Psoas muscle (tissue), 8 donors: ENCODE measurements at regions of chr20 and their contacts with region 1.

Region 1: DNA sequence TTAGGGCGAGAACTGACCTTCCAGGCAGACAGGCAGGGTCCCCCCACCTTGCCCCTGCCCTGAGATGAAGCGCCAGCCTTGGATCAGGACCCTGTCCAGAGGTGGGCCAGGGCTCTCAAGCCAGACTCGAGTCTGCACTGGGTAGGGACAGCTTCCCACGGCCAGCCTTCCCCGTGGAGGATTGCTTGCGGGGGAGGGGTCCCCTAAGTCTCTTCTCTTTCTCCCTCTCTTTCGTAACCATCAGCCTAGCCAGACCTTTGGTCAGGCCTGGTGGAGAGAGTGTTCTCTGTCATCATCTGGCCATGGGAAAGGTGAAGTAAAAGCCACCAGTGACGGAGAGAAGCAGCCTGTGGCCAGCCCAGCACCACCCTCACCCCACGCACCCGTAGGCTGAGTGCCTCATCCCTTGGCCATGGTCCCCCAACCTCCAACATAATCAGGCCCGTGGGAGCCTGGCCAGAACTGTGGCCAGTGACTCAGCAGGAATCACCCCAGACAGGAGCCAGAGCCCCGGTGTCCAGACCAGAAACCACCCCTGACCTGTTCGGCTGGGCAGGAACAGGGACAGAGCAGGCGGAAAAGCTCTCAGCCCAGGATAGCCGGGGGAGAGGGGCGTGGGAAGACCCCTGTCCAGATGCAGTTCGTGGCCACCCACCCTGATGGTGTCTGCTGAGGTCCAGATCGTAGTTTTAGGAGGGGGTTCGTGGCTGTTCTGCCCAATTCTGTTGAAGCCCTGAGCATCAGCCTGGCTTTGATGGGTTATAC is 47.1 kb downstream of the SNAI1 start:
- DNase-seq: peak; percentile 77
- ATAC-seq: peak; percentile 72 to 83 (median 82)
- H3K4me3 ChIP-seq: no peak overlapping the region
- H3K27ac ChIP-seq: no peak overlapping the region
- H3K4me1 ChIP-seq: peaks cover 12% of the 10 kb centered on the region
- H3K27me3 ChIP-seq: no peaks in the 10 kb centered on the region
- CTCF ChIP-seq: no peak

Region 2: GRCh38 chr20:49989234-49990065 is 40.4 kb before region 1 on chr20:
- intact Hi-C with region 1: loop called in 1 of 2 experiments (anchors 5 kb)
- DNase-seq: peak; percentile 70 to 84
- ATAC-seq: peak; percentile 26 to 60 (median 32)
- H3K4me3 ChIP-seq: peak overlapping the region; percentile 3
- H3K27ac ChIP-seq: peak overlapping the region; percentile 66
- H3K4me1 ChIP-seq: peaks cover 19% of the 10 kb centered on the region
- H3K27me3 ChIP-seq: no peaks in the 10 kb centered on the region
- CTCF ChIP-seq: no peak

Region 3: DNA sequence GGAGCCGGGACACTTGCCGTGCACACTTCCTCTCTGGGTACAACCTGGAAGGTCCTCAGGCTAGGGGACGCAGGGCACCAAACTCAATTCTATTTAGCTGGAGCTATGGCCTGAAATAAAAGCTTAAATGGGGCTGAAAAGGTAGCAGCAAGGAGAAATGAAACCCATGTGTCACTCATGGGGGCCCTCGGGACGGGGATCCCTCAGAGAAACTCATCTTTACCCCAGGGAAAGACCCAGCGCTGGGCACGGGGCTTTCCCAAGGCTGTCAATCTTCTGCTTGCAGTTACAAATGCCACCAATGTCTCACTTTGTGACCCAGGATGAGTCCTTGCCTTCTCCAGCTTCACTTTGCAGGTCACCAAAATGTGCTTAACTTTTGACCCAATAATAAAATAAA is 30.6 kb before region 1 on chr20:
- intact Hi-C with region 1: loop called in 1 of 2 experiments (anchors 5 kb)
- DNase-seq: no peak
- ATAC-seq: no peak
- H3K4me3 ChIP-seq: no peak overlapping the region
- H3K27ac ChIP-seq: no peak overlapping the region
- H3K4me1 ChIP-seq: peaks cover 7% of the 10 kb centered on the region
- H3K27me3 ChIP-seq: no peaks in the 10 kb centered on the region
- CTCF ChIP-seq: no peak

Region 4: GRCh38 chr20:50112512-50113353 is 82.9 kb after region 1 on chr20 and contains the start of gene UBE2V1:
- intact Hi-C with region 1: no loop called
- DNase-seq: peak; percentile 91 to 95
- ATAC-seq: peak; percentile 81 to 86 (median 84)
- H3K4me3 ChIP-seq: peak within 1 kb of the TSS; percentile 91
- H3K27ac ChIP-seq: peak within 1 kb of the TSS; percentile 97
- H3K4me1 ChIP-seq: peaks cover 72% of the 10 kb centered on the region
- H3K27me3 ChIP-seq: no peaks in the 10 kb centered on the region
- CTCF ChIP-seq: peak; percentile 28
- total RNA-seq, gene UBE2V1: 45.2 to 78.1 (median 57.5) TPM